ENCODE measurements at regions of chr1 and their contacts with region 1.

Region 1: DNA sequence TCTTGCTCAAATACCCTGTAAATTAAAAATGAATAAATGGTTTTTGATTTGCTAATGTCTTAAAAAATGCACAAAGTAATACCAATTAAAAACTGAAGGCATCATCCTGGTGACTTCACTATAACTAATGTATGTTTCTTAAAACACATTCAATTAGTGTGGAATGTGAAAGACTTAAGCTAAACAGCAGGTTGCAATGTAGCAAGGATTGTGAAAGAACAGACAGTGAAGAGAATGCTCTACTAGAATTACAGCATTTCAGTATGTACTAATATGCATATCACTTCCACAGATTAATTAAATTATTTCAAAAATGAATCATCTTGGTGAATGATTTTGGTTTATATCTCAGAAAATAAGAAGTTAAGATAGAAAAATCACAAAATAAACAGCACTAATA is 56.4 kb downstream of the LHX4 start:
- DNase-seq: no peak
- ATAC-seq: no peak
- H3K4me3 ChIP-seq: no peak overlapping the region
- H3K27ac ChIP-seq: no peak overlapping the region
- H3K4me1 ChIP-seq: no peaks in the 10 kb centered on the region
- H3K27me3 ChIP-seq: no peaks in the 10 kb centered on the region
- CTCF ChIP-seq: no peak

Region 2: GRCh38 chr1:180057883-180058396 is 228.5 kb before region 1 on chr1:
- CTCF ChIA-PET with region 1: no interaction called
- POLR2A ChIA-PET with region 1: interaction called, 13 read pairs
- in situ Hi-C with region 1: no loop called
- intact Hi-C with region 1: no loop called
- DNase-seq: no peak
- ATAC-seq: no peak
- H3K4me3 ChIP-seq: no peak overlapping the region
- H3K27ac ChIP-seq: no peak overlapping the region
- H3K4me1 ChIP-seq: no peaks in the 10 kb centered on the region
- H3K27me3 ChIP-seq: no peaks in the 10 kb centered on the region
- CTCF ChIP-seq: no peak

Region 3: DNA sequence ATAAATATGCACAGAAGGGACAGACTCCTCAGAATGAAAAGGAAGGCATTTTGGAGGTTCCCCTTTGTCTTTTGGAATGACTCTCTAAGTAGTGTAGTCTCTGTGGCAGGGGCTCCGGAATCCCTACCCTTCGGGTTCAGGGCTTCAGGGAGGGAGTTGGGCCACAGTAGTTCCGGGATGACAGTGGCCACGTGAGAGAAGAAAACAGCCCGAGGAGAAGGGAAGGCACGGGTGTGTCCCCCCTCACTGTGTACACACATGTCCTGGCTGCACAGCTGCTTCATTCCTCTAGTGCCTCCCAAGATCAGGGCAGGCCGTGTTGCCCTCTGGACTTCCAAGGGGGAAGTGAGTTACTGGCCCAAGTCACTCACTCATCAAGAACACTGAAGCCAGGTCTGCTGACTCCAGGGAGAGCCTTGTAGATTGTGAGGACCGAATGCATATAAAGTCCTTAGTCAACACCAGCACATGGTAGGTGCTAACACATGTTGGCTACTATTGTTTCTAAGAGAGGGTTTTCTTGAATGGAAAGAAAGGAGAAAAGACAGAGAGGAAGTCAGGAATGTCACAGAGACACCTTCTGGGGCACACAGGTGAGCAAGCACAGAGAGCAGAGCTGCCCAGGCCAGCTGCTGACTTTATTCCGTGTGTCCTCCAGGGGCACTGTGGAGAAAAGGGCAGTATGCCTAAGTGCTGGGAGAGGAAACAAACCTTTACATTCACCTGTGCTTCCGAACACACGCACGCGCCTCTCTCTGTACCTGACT is 16.5 kb before region 1 on chr1:
- CTCF ChIA-PET with region 1: no interaction called
- POLR2A ChIA-PET with region 1: no interaction called
- in situ Hi-C with region 1: no loop called
- intact Hi-C with region 1: no loop called
- DNase-seq: no peak
- ATAC-seq: peak; percentile 78
- H3K4me3 ChIP-seq: no peak overlapping the region
- H3K27ac ChIP-seq: no peak overlapping the region
- H3K4me1 ChIP-seq: no peaks in the 10 kb centered on the region
- H3K27me3 ChIP-seq: no peaks in the 10 kb centered on the region
- CTCF ChIP-seq: peak; percentile 83